ENCODE measurements at regions of chr1 and their contacts with region 1.

Region 1: GRCh38 chr1:27300341-27301051 is 21.5 kb upstream of the TMEM222 start:
- DNase-seq: peak; percentile 66 to 84 (median 76)
- ATAC-seq: peak; percentile 95
- H3K4me3 ChIP-seq: no peak overlapping the region
- H3K4me3 Mint-ChIP-seq: no peak overlapping the region
- H3K27ac ChIP-seq: no peak overlapping the region
- H3K27ac Mint-ChIP-seq: no peak overlapping the region
- H3K4me1 ChIP-seq: no peaks in the 10 kb centered on the region
- H3K4me1 Mint-ChIP-seq: peaks cover 0 to 9% (median 3%) of the 10 kb centered on the region in 7 donors
- H3K27me3 ChIP-seq: no peaks in the 10 kb centered on the region
- H3K27me3 Mint-ChIP-seq: no peaks in the 10 kb centered on the region

Region 2: GRCh38 chr1:27000817-27001460 is 299.6 kb before region 1 on chr1:
- CTCF ChIA-PET with region 1: no interaction called
- POLR2A ChIA-PET with region 1: no interaction called
- intact Hi-C with region 1: no loop called
- DNase-seq: no peak
- ATAC-seq: peak; percentile 27
- H3K4me3 ChIP-seq: no peak overlapping the region
- H3K4me3 Mint-ChIP-seq: no peak overlapping the region
- H3K27ac ChIP-seq: no peak overlapping the region
- H3K27ac Mint-ChIP-seq: no peak overlapping the region
- H3K4me1 ChIP-seq: peaks cover 0 to 7% of the 10 kb centered on the region in 2 donors
- H3K4me1 Mint-ChIP-seq: peaks cover 0 to 13% (median 6%) of the 10 kb centered on the region in 7 donors
- H3K27me3 ChIP-seq: peaks cover 0 to 4% of the 10 kb centered on the region in 2 donors
- H3K27me3 Mint-ChIP-seq: peaks cover 7 to 30% (median 14%) of the 10 kb centered on the region in 5 donors

Region 3: GRCh38 chr1:27314169-27314568 is 13.7 kb after region 1 on chr1:
- CTCF ChIA-PET with region 1: interaction called, 15 read pairs
- POLR2A ChIA-PET with region 1: interaction called, 4 read pairs
- intact Hi-C with region 1: no loop called
- DNase-seq: no peak
- ATAC-seq: no peak
- H3K4me3 ChIP-seq: no peak overlapping the region
- H3K4me3 Mint-ChIP-seq: no peak overlapping the region
- H3K27ac ChIP-seq: no peak overlapping the region
- H3K27ac Mint-ChIP-seq: peak overlapping the region in 3 of 9 donors; percentile 43 to 64 (median 47)
- H3K4me1 ChIP-seq: no peaks in the 10 kb centered on the region
- H3K4me1 Mint-ChIP-seq: peaks cover 0 to 5% (median 0%) of the 10 kb centered on the region in 7 donors
- H3K27me3 ChIP-seq: no peaks in the 10 kb centered on the region
- H3K27me3 Mint-ChIP-seq: peaks cover 0 to 11% (median 0%) of the 10 kb centered on the region in 5 donors

Region 4: DNA sequence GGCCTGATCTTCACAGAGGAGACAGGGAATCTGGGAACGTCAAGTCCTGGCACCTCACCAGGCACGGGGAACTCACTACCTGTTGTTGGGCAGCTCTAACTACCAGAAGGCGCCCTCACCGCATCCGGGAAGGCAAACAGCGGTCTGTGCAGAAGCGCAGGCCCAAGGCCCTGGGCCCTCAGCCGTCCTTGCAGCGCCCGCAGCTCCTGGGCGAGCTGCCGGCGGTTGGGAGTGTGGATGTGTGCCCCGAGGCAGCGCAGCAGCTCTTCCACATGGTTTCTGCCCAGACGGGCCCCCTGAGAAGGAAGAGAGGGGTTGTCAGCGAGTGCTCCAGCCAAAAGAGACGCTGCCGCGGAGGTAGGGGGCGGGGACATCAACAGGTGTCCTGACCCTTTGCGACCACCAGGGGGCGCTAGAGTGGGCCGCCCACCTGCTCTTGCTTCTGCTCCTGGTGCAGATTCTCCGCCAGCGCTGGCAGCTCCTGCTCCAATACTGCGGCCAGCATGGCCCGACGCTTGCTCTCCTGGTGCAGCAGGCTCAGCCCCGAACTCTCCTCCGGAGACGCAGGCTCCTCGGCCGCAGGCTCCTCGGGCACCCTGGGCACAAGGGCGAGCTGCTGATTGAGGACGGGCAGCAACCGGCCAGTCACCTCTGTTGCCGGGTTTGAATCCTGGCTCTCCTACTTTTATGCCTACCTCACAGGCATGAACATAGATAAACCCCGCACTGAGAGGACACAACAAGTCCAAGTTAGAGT is 57.0 kb after region 1 on chr1:
- CTCF ChIA-PET with region 1: interaction called, 23 read pairs
- POLR2A ChIA-PET with region 1: interaction called, 3 read pairs
- intact Hi-C with region 1: loop called in 1 of 2 experiments (anchors 1 kb)
- DNase-seq: peak; percentile 76 to 89 (median 85)
- ATAC-seq: peak; percentile 94
- H3K4me3 ChIP-seq: peak overlapping the region; percentile 76
- H3K4me3 Mint-ChIP-seq: peak overlapping the region; percentile 74 to 88 (median 80)
- H3K27ac ChIP-seq: peak overlapping the region; percentile 70
- H3K27ac Mint-ChIP-seq: peak overlapping the region; percentile 62 to 90 (median 88)
- H3K4me1 ChIP-seq: peaks cover 37 to 41% of the 10 kb centered on the region in 2 donors
- H3K4me1 Mint-ChIP-seq: peaks cover 23 to 56% (median 45%) of the 10 kb centered on the region in 7 donors
- H3K27me3 ChIP-seq: no peaks in the 10 kb centered on the region
- H3K27me3 Mint-ChIP-seq: no peaks in the 10 kb centered on the region